ENCODE measurements at regions of chr19 and their contacts with region 1.

Region 1: GRCh38 chr19:49502866-49503581 is 6.8 kb downstream of the RPS11 start:
- DNase-seq: peak; percentile 66
- ATAC-seq: no peak
- H3K4me3 Mint-ChIP-seq: no peak overlapping the region
- H3K27ac Mint-ChIP-seq: no peak overlapping the region
- H3K4me1 Mint-ChIP-seq: peaks cover 47% of the 10 kb centered on the region
- H3K27me3 Mint-ChIP-seq: no peaks in the 10 kb centered on the region

Region 2: GRCh38 chr19:49512970-49513745 is 10.1 kb after region 1 on chr19:
- CTCF ChIA-PET with region 1: interaction called, 18 read pairs
- DNase-seq: no peak
- ATAC-seq: peak; percentile 72
- H3K4me3 Mint-ChIP-seq: peak overlapping the region; percentile 72
- H3K27ac Mint-ChIP-seq: peak overlapping the region; percentile 66
- H3K4me1 Mint-ChIP-seq: peaks cover 18% of the 10 kb centered on the region
- H3K27me3 Mint-ChIP-seq: no peaks in the 10 kb centered on the region

Region 3: DNA sequence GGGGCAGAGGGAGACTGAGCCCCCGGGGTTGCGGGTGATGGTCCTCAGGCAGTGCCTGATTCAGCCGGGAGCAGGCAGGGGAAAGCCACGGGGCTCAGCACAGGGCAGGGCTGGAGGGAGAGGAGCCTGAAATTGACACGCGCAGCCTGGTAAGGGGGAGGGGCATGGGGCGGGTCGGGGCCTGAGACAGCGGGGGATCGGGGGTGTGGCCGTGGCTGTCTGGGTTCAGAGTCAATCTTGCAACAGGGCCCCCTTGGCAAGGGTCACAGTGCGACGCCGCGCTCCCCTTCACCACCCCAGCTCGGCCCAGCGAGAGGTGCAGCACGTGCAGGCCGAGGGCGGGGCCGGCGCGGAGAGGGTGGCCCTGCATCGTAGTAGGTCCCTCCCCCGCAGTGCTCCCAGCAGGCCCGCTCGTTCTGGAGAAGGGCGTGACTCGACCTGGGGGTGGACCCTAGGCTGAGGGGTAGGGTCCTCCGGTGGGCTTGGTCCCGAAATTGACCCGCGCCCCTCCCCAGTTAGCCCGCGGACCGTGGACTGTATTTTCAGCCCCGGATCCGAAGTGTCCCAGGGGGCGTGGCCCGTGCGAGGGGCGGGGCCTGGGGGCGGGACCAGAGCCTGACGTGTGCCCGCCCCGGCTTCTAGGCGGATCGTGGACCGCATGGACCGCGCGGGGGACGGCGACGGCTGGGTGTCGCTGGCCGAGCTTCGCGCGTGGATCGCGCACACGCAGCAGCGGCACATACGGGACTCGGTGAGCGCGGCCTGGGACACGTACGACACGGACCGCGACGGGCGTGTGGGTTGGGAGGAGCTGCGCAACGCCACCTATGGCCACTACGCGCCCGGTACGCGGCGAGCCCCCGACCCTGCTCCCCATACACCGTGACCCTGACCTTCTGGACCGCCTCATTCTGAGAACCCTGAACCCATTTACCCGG is 30.8 kb after region 1 on chr19:
- CTCF ChIA-PET with region 1: interaction called, 24 read pairs
- DNase-seq: peak; percentile 86
- ATAC-seq: peak; percentile 94
- H3K4me3 Mint-ChIP-seq: peak overlapping the region; percentile 74
- H3K27ac Mint-ChIP-seq: peak overlapping the region; percentile 62
- H3K4me1 Mint-ChIP-seq: peaks cover 23% of the 10 kb centered on the region
- H3K27me3 Mint-ChIP-seq: peaks cover 2% of the 10 kb centered on the region

Region 4: DNA sequence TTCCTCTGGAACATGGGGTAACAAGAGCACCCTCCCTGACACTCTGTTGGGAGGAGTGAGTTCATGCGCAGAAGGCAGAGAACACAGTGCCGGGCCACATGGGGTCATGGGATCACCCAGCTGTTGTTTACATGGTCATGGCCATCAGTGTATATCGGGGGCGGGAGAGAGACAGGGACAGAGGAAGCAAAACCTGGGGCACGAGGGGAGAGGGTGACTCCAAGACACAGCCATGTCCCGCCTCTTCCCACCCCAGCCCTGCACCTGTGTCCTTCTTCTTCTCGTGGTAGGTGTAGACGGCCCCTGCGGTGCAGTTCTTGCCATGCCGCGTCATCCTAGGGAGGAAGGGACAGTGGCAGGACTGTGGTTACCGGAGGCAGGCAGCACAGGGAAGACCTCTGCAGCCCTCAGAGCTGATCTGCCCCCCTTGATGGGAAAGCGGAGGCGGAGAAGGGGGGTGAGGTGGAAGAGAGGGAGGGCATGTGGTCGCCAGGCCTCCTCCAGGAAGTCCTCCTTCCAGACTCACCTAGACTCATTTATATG is 57.4 kb after region 1 on chr19:
- CTCF ChIA-PET with region 1: interaction called, 33 read pairs
- DNase-seq: peak; percentile 60
- ATAC-seq: peak; percentile 40
- H3K4me3 Mint-ChIP-seq: peak overlapping the region; percentile 64
- H3K27ac Mint-ChIP-seq: peak overlapping the region; percentile 88
- H3K4me1 Mint-ChIP-seq: peaks cover 70% of the 10 kb centered on the region
- H3K27me3 Mint-ChIP-seq: no peaks in the 10 kb centered on the region

Region 5: GRCh38 chr19:49665351-49666119 is 162.5 kb after region 1 on chr19 and contains the starts of genes BCL2L12 and IRF3:
- CTCF ChIA-PET with region 1: interaction called, 10 read pairs
- DNase-seq: peak; percentile 99
- ATAC-seq: peak; percentile 86
- H3K4me3 Mint-ChIP-seq: peak within 1 kb of the TSS; percentile 97
- H3K27ac Mint-ChIP-seq: peak within 1 kb of the TSS; percentile 92
- H3K4me1 Mint-ChIP-seq: peaks cover 34% of the 10 kb centered on the region
- H3K27me3 Mint-ChIP-seq: no peaks in the 10 kb centered on the region
- total RNA-seq, gene BCL2L12: 90.6 to 94.5 TPM
- total RNA-seq, gene IRF3: 159 to 170 TPM